ENCODE measurements at regions of chr6 and their contacts with region 1.

Region 1: GRCh38 chr6:56359201-56359899 is 112.0 kb upstream of the COL21A1 start:
- DNase-seq: peak in 6 of 10 donors; percentile 20 to 72 (median 66)

Region 2: GRCh38 chr6:56593801-56594318 is 234.5 kb after region 1 on chr6:
- intact Hi-C with region 1: loop called (anchors 2 kb)
- DNase-seq: no peak

Measured in posterior cingulate gyrus (tissue), 11 donors.